K562 (cell line): ENCODE measurements at regions of chr16 and their contacts with region 1.

Region 1: GRCh38 chr16:6081320-6081976 is 983.9 kb upstream of the EEF2KMT start:
- DNase-seq: peak; percentile 57 to 74 (median 66)
- ATAC-seq: peak; percentile 72
- H3K4me3 ChIP-seq: no peak overlapping the region
- H3K27ac ChIP-seq: no peak overlapping the region
- H3K4me1 ChIP-seq: no peaks in the 10 kb centered on the region
- H3K27me3 ChIP-seq: no peaks in the 10 kb centered on the region; a peak in 1 of 5 replicates
- CTCF ChIP-seq: peak; percentile 59 to 78 (median 75)
- EP300 ChIP-seq: no peak
- POLR2A ChIP-seq: no peak
- RAD21 ChIP-seq: peak in 1 of 2 experiments; percentile 66; a peak in 3 of 4 replicates

Region 2: DNA sequence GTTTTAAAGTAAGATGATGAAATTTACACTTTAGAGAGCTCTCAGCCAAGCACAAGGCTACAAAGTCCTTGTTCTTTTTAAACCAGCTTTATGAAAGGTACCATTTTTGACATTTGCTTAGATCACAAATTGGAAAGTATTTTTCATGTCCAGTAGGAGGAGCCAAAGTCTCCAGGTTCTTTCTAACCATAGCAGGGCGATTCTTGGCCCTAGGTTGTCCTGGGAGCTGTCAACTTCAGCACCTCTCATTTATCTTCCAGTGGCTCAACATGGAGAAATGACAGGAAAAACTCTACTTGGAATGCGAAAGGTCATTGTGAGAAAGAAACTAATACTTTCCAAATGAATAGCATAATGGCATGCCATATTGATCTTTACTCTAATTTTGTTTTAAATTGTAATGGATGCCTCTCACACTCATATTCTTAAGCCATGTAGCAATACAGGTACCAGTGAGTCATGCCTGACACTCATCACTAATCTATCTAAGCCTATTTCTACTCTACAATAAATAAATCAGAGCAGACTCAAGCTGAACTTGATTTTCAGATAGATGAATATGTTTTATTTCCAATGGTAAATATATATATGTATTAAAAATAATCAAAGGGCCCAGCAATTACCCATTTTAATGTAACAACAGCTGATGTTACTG is 64.8 kb before region 1 on chr16:
- CTCF ChIA-PET with region 1: no interaction called
- POLR2A ChIA-PET with region 1: no interaction called
- in situ Hi-C with region 1: no loop called
- intact Hi-C with region 1: loop called (anchors 1 kb)
- DNase-seq: peak; percentile 56 to 65 (median 62)
- ATAC-seq: peak; percentile 67; the same call in 1 of the 3 replicates
- H3K4me3 ChIP-seq: no peak overlapping the region
- H3K27ac ChIP-seq: no peak overlapping the region
- H3K4me1 ChIP-seq: no peaks in the 10 kb centered on the region
- H3K27me3 ChIP-seq: peaks cover 0 to 31% of the 10 kb centered on the region in 2 experiments; a peak in 1 of 5 replicates
- CTCF ChIP-seq: peak in 2 of 3 experiments; percentile 51 to 67; a peak in 4 of 6 replicates
- EP300 ChIP-seq: no peak
- POLR2A ChIP-seq: no peak
- RAD21 ChIP-seq: peak in 1 of 2 experiments; percentile 55; a peak in 2 of 4 replicates

Region 3: GRCh38 chr16:6643080-6643686 is 561.7 kb after region 1 on chr16:
- CTCF ChIA-PET with region 1: no interaction called
- POLR2A ChIA-PET with region 1: no interaction called
- in situ Hi-C with region 1: no loop called
- intact Hi-C with region 1: no loop called
- DNase-seq: peak; percentile 16 to 58 (median 32)
- ATAC-seq: no peak
- H3K4me3 ChIP-seq: no peak overlapping the region
- H3K27ac ChIP-seq: no peak overlapping the region
- H3K4me1 ChIP-seq: no peaks in the 10 kb centered on the region
- H3K27me3 ChIP-seq: peaks cover 11 to 14% of the 10 kb centered on the region in 2 experiments; a peak in 4 of 5 replicates
- CTCF ChIP-seq: peak; percentile 55 to 86 (median 74); a peak in 5 of 6 replicates
- EP300 ChIP-seq: no peak
- POLR2A ChIP-seq: no peak
- RAD21 ChIP-seq: peak; percentile 69 to 85